Heart right ventricle (tissue), 16 donors: ENCODE measurements at regions of chr5 and their contacts with region 1.

Region 1: DNA sequence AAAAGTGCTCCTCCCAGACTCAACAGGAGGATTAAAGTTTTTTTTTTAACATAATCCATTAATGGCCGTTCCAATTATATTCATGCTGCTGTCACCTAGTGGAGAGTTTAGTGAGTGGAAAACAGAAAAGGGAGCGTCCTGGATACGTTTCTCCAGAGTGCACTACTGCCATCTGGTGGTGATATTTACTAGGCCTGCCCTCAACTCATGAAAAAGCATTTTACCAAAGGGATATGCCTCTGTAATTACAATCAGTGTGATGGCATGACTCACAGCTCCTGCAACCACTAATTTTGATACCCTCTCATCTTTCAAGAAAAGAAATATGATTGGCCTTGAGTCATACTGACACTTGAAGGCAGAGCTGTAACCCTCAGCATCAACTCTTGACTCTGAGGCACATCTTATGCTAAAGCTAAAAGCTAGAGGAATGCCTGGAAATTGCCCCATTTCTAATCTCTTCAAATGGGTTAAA is 20.0 kb downstream of the MINAR2 start:
- DNase-seq: peak in 1 of 2 donors; percentile 72
- ATAC-seq: peak; percentile 73 to 94 (median 88)
- H3K4me3 ChIP-seq: no peak overlapping the region
- H3K27ac ChIP-seq: no peak overlapping the region
- H3K4me1 ChIP-seq: peaks cover 0 to 3% (median 0%) of the 10 kb centered on the region in 9 donors
- H3K27me3 ChIP-seq: peaks cover 0 to 3% (median 0%) of the 10 kb centered on the region in 7 donors
- CTCF ChIP-seq: peak; percentile 95 to 99 (median 97)

Region 2: DNA sequence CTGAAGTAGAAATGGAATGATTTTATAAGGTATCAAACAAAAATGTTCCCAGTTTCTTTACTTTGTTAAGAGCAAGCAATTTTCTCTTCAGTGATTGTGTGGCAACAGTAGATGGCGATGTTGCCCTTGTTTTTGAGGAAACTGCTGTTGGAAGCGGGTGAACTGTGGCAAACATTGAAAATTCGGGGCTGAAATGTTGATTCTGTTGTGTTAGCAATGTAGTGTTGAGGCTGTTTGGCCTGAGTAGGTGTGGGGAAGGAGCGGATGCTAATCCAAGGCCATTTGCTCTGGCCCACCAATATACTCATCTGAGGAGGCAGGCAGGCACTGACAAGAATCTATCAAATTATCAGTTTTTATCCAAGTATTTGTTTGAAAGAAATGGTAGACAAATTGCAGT is 1554.6 kb before region 1 on chr5:
- intact Hi-C with region 1: loop called in 2 of 10 experiments (anchors 5 to 10 kb)
- DNase-seq: peak in 1 of 2 donors; percentile 59
- ATAC-seq: no peak
- H3K4me3 ChIP-seq: no peak overlapping the region
- H3K27ac ChIP-seq: no peak overlapping the region
- H3K4me1 ChIP-seq: peaks cover 0 to 13% (median 6%) of the 10 kb centered on the region in 9 donors
- H3K27me3 ChIP-seq: no peaks in the 10 kb centered on the region
- CTCF ChIP-seq: peak; percentile 49 to 91 (median 76)

Region 3: DNA sequence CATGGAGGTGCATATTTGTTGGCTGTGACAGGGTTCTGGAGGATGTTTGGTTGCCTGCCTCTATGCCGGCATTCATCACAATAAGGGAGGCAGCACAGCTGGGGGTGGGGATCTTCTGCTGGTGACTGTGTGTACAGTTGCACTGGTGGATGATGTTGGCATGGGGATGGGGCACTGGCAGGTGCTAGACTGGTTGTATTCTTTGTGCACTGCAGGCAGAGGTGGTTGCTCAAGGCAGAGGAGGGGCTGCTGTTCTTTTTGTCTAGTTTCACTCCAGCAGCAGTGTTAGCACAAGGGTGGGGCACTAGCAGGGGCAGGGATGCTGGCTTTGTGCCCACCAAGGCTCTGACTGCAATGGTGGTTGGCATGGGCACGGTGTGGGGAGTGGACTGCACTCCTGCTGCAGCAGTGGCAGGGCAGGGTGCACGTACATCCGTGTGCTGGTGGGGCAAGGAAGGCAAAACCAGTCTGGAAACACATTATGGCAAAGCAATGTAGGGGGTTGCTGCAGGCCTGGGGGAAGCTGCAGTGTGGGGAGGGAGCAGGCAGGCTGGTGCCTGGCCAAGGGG is 604.0 kb before region 1 on chr5:
- intact Hi-C with region 1: loop called in 1 of 10 experiments (anchors 10 kb)
- DNase-seq: no peak
- ATAC-seq: peak in 1 of 8 donors; percentile 13
- H3K4me3 ChIP-seq: no peak overlapping the region
- H3K27ac ChIP-seq: no peak overlapping the region
- H3K4me1 ChIP-seq: no peaks in the 10 kb centered on the region
- H3K27me3 ChIP-seq: no peaks in the 10 kb centered on the region
- CTCF ChIP-seq: no peak

Region 4: DNA sequence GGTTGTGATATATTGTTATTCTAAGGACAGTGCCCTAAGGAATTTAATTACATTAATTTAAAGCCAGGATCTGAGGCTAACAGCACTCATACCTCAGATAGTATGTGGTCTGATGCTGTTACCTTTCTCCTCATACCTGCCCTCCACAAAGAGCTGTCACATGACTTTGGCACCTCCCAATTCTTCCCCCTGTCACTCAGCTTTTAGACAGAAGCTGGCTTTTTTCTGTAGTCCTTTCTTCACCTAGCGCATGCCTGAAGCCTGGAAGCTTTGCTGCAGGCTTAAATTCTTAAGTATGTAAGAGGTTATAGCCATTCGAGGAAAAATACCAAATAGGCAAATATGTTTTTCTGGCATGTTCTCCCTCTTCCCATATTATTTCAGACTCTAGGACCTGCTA is 368.9 kb before region 1 on chr5:
- intact Hi-C with region 1: loop called in 1 of 10 experiments (anchors 5 kb)
- DNase-seq: no peak
- ATAC-seq: no peak
- H3K4me3 ChIP-seq: no peak overlapping the region
- H3K27ac ChIP-seq: no peak overlapping the region
- H3K4me1 ChIP-seq: no peaks in the 10 kb centered on the region
- H3K27me3 ChIP-seq: peaks cover 0 to 4% (median 0%) of the 10 kb centered on the region in 7 donors
- CTCF ChIP-seq: no peak

Region 5: GRCh38 chr5:129852747-129853352 is 84.9 kb after region 1 on chr5:
- intact Hi-C with region 1: loop called in 5 of 10 experiments (anchors 2 to 5 kb)
- DNase-seq: peak; percentile 64 to 77
- ATAC-seq: peak in 6 of 8 donors; percentile 52 to 75 (median 69)
- H3K4me3 ChIP-seq: no peak overlapping the region
- H3K27ac ChIP-seq: no peak overlapping the region
- H3K4me1 ChIP-seq: peaks cover 0 to 7% (median 0%) of the 10 kb centered on the region in 9 donors
- H3K27me3 ChIP-seq: no peaks in the 10 kb centered on the region
- CTCF ChIP-seq: peak; percentile 76 to 95 (median 89)